Activated B cell treated with CpG ODN at 0.5 μM for 24 hours (primary cell): ENCODE measurements at regions of chr19 and their contacts with region 1.

Region 1: GRCh38 chr19:47256688-47257443 is 541 bp downstream of the CCDC9 start:
- DNase-seq: peak; percentile 99
- ATAC-seq: peak; percentile 82
- H3K4me3 Mint-ChIP-seq: peak overlapping the region; percentile 93
- H3K27ac Mint-ChIP-seq: peak overlapping the region; percentile 92
- H3K4me1 Mint-ChIP-seq: peaks cover 39% of the 10 kb centered on the region
- H3K27me3 Mint-ChIP-seq: no peaks in the 10 kb centered on the region
- CTCF ChIP-seq: no peak

Region 2: GRCh38 chr19:46586303-46587001 is 670.4 kb before region 1 on chr19:
- CTCF ChIA-PET with region 1: no interaction called
- POLR2A ChIA-PET with region 1: no interaction called
- intact Hi-C with region 1: no loop called
- DNase-seq: no peak
- ATAC-seq: no peak
- H3K4me3 Mint-ChIP-seq: no peak overlapping the region
- H3K27ac Mint-ChIP-seq: no peak overlapping the region
- H3K4me1 Mint-ChIP-seq: no peaks in the 10 kb centered on the region
- H3K27me3 Mint-ChIP-seq: no peaks in the 10 kb centered on the region
- CTCF ChIP-seq: no peak

Region 3: DNA sequence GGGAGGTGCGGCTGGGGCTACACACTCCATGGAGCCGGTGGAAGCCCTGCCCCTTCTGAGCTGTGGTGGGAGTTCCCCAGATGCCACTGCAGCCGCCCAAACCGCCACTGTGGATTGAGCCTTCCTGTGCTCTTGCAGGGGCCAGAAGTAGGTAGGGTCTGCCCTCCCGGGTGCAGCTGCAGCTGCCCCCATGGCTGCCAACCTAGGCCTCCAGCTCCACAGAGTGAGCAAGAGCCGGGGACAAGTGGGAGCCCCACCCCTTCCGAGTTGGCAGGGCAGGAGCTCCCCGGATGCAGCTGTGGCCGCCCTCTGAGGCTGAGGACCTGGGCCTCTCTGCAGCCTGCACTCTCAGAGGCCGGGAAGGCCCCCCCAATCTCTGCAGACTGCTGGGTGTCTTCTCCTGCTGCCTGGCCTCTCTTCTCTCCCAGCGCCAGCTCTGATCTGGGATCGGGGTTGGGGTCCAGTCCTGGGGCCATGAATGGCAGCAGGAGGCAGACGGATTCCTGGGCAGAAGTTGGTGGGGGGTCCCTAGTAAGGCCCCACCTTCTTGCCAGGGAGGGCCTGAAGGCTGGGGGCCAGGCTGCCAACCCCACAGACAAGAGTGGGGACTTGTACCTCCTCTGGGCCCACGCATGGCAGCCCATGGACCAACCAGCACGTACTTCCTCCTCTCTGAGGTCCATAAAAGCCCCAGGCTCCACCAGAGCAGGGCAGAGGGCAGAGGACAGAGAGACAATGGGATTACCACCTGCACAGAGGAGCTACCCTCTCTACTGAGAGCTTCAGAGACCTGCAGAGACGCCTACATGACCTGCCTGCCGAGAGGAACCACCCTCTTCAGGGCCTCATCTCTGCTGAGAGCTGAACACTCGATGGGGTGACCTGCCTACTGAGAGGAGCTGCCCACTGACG is 435.1 kb before region 1 on chr19:
- CTCF ChIA-PET with region 1: no interaction called
- POLR2A ChIA-PET with region 1: interaction called, 10 read pairs
- intact Hi-C with region 1: no loop called
- DNase-seq: peak; percentile 54
- ATAC-seq: peak; percentile 71
- H3K4me3 Mint-ChIP-seq: peak overlapping the region; percentile 48
- H3K27ac Mint-ChIP-seq: peak overlapping the region; percentile 90
- H3K4me1 Mint-ChIP-seq: peaks cover 61% of the 10 kb centered on the region
- H3K27me3 Mint-ChIP-seq: no peaks in the 10 kb centered on the region
- CTCF ChIP-seq: no peak

Region 4: DNA sequence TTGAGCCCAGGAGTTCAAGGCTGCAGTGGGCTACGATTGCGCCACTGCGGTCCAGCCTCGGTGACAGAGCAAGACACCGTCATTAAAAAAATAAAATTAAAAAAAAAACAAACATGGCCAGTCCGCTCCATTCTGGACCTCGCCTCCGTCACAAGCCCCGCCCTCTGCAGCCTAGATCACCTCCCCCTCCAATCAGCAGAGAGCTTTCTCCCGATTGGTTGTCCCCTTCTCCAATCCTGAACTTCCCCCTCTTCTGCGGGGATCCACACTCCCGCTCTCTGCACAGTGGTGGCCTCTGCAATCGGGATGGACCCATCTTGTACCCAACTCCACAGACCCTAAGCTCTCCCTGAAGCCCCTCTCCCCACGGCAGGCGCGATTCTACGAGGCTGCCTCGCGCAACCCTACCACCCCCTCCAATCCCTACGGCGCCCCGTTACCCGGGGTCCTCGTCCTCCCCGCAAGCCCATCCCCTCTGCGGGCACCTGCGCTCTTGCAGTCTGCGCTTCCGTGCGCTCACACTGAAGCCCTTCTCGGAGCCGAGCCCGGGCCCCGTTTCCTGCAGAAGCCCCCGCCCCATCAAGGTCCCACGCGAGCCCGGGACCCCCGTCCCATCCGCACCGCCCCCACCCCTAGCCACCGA is 209.0 kb before region 1 on chr19:
- CTCF ChIA-PET with region 1: no interaction called
- POLR2A ChIA-PET with region 1: interaction called, 3 read pairs
- intact Hi-C with region 1: loop called (anchors 1 kb)
- DNase-seq: peak; percentile 52
- ATAC-seq: peak; percentile 32
- H3K4me3 Mint-ChIP-seq: peak overlapping the region; percentile 95
- H3K27ac Mint-ChIP-seq: peak overlapping the region; percentile 89
- H3K4me1 Mint-ChIP-seq: peaks cover 15% of the 10 kb centered on the region
- H3K27me3 Mint-ChIP-seq: no peaks in the 10 kb centered on the region
- CTCF ChIP-seq: no peak

Region 5: DNA sequence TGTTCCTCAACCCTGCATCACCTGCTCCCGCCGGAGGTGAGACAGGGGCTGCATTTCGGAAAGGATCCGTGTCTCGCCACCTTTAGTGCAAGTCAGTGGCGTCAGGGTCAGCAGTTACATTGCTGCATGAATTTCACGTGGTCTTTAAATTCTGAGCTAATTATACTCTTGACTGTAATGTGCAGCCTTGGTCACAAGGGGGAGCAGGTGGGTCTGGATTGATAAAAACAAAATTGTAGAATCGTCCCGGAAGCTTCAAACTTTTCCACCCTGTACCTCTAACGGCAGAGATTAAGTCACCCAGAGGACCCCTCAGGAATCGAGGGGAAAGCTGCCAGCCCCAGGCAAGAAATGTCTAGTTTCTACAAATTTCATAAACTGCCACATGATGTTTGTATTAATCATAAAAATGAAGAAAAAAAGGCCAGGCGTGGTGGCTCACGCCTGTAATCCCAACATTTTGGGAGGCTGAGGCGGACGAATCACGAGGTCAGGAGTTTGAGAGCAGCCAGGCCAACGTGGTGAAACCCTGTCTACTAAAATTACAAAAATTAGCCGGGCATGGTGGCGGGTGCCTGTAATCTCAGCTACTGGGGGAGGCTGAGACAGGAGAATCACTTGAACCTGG is 46.1 kb before region 1 on chr19:
- CTCF ChIA-PET with region 1: interaction called, 13 read pairs
- POLR2A ChIA-PET with region 1: interaction called, 21 read pairs
- intact Hi-C with region 1: no loop called
- DNase-seq: peak; percentile 53
- ATAC-seq: peak; percentile 94
- H3K4me3 Mint-ChIP-seq: no peak overlapping the region
- H3K27ac Mint-ChIP-seq: peak overlapping the region; percentile 87
- H3K4me1 Mint-ChIP-seq: peaks cover 9% of the 10 kb centered on the region
- H3K27me3 Mint-ChIP-seq: no peaks in the 10 kb centered on the region
- CTCF ChIP-seq: peak; percentile 83

Region 6: GRCh38 chr19:47273313-47273977 is 16.6 kb after region 1 on chr19:
- CTCF ChIA-PET with region 1: interaction called, 4 read pairs
- POLR2A ChIA-PET with region 1: interaction called, 144 read pairs
- intact Hi-C with region 1: loop called (anchors 1 kb)
- DNase-seq: peak; percentile 83
- ATAC-seq: peak; percentile 54
- H3K4me3 Mint-ChIP-seq: peak overlapping the region; percentile 96
- H3K27ac Mint-ChIP-seq: peak overlapping the region; percentile 97
- H3K4me1 Mint-ChIP-seq: peaks cover 27% of the 10 kb centered on the region
- H3K27me3 Mint-ChIP-seq: no peaks in the 10 kb centered on the region
- CTCF ChIP-seq: no peak

Region 7: GRCh38 chr19:47305309-47305751 is 48.5 kb after region 1 on chr19:
- CTCF ChIA-PET with region 1: no interaction called
- POLR2A ChIA-PET with region 1: no interaction called
- intact Hi-C with region 1: no loop called
- DNase-seq: peak; percentile 42
- ATAC-seq: no peak
- H3K4me3 Mint-ChIP-seq: peak overlapping the region; percentile 35
- H3K27ac Mint-ChIP-seq: peak overlapping the region; percentile 1
- H3K4me1 Mint-ChIP-seq: peaks cover 24% of the 10 kb centered on the region
- H3K27me3 Mint-ChIP-seq: peaks cover 13% of the 10 kb centered on the region
- CTCF ChIP-seq: peak; percentile 61

Region 8: DNA sequence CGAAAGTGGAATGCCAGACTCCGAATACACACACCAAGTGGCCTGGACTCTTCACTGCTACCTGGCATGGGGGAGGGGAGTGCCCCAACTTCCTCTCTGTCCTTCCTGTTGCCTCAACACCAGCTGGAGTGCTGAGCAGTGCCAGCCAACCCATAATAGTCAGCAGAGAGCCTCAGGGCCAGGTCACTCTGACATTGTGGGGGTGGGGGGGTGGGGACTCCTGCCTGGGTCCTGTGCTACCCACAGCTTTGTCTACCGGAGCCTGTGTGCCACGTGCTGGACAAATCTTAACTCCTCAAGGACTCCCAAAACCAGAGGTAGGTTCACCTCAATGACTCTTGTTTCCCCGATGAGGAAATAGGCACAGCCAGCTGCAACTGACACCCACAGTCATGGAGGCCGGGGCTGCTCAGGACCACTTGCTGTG is 80.0 kb after region 1 on chr19:
- CTCF ChIA-PET with region 1: no interaction called
- POLR2A ChIA-PET with region 1: no interaction called
- intact Hi-C with region 1: no loop called
- DNase-seq: no peak
- ATAC-seq: peak; percentile 54
- H3K4me3 Mint-ChIP-seq: no peak overlapping the region
- H3K27ac Mint-ChIP-seq: no peak overlapping the region
- H3K4me1 Mint-ChIP-seq: peaks cover 7% of the 10 kb centered on the region
- H3K27me3 Mint-ChIP-seq: peaks cover 5% of the 10 kb centered on the region
- CTCF ChIP-seq: no peak

Region 9: DNA sequence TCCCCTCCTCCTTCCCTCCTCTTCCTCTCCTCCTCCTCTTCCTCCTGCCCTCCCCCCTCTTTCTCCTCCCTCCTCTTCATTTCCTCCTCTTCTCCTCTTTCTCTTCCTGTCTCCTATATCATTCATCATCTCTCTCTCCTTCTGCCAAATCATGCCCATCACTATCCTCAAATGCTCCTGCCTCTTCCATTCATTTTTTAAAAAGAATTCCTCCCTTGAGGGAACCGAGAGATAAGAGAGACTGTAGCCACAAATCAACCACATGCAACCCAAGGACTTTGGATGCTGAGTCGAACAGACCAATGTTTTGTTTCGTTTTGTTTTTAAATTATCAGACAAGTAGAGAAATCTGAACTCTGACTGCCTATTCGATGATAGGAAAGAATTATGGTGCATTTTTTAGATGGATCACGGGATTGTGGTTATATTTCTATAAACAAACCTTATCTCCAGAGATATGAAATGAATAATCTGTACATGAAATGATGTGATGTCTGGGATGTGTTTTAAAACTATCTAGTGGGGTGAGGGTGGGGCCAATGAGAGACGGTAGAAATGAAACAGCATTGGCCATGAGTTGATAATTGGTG is 325.5 kb after region 1 on chr19:
- CTCF ChIA-PET with region 1: no interaction called
- POLR2A ChIA-PET with region 1: no interaction called
- intact Hi-C with region 1: no loop called
- DNase-seq: no peak
- ATAC-seq: no peak
- H3K4me3 Mint-ChIP-seq: no peak overlapping the region
- H3K27ac Mint-ChIP-seq: no peak overlapping the region
- H3K4me1 Mint-ChIP-seq: peaks cover 15% of the 10 kb centered on the region
- H3K27me3 Mint-ChIP-seq: peaks cover 37% of the 10 kb centered on the region
- CTCF ChIP-seq: no peak